ENCODE measurements at regions of chr9 and their contacts with region 1.

Region 1: DNA sequence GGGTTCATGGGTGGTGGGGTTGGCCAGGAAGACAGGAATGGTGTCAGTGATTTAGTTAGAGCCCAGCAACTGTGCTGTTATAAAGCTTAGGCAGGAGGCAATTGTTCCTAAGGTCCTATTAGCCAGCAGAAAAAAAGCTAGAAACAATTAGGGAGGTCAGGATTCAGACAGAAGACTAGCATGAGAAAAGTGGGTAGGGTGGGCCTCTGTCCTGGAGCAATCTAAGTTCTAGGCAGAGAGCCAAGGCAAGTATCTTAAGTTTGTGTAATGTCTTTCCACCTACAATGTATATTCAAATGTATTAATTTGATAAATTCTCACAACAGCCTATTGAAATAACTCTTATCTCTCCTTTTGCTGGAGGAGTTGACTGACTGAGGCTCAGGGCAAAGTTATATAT is 6.1 kb upstream of the ZFAND5 start:
- DNase-seq: no peak
- ATAC-seq: no peak
- H3K4me3 ChIP-seq: no peak overlapping the region
- H3K27ac ChIP-seq: no peak overlapping the region
- H3K4me1 ChIP-seq: no peaks in the 10 kb centered on the region
- H3K27me3 ChIP-seq: no peaks in the 10 kb centered on the region

Region 2: DNA sequence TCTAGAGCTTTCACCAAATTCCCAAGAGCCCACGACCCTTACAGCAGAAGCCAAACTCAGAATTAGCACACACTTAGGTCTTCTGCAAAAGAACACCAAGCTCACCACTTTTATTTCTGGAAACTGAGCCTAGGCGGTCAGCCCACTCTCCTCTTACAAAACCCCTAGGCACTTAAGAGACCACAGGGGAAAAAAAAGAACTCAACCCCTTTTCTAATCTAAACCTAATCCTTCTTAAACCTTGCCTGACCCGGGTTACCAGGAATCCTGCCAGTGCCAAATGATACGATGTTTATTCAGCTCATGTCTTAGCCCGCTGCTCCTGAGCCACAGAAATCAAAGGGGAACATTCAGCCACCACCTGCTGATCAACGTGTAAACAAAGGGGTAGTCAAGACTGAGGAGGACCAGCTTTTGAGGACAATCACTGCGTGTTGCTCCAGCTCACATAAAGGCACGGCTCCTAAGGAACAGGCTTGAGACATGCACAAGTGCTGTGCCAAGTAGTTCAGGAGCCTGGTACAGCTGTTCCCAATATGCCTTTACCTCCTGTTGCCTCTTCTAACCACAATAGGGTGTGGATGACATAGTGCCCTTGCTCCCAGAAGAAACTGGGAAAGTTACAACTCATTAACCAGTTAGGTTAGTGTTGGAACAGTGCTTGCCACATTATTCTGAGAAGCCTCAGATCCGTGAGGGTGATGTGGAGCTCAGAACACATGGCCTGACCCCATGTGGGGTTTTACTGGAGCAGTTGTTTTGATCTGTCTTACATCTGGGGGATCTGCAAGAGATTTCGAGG is 55.4 kb before region 1 on chr9:
- intact Hi-C with region 1: no loop called
- DNase-seq: peak in 1 of 3 donors; percentile 48
- ATAC-seq: peak; percentile 63 to 80
- H3K4me3 ChIP-seq: peak overlapping the region; percentile 14
- H3K27ac ChIP-seq: peak overlapping the region; percentile 42
- H3K4me1 ChIP-seq: peaks cover 4% of the 10 kb centered on the region
- H3K27me3 ChIP-seq: no peaks in the 10 kb centered on the region

Region 3: GRCh38 chr9:72586388-72587130 is 215.4 kb after region 1 on chr9:
- intact Hi-C with region 1: loop called in 2 of 4 experiments (anchors 10 kb)
- DNase-seq: no peak
- ATAC-seq: peak; percentile 61 to 78
- H3K4me3 ChIP-seq: no peak overlapping the region
- H3K27ac ChIP-seq: no peak overlapping the region
- H3K4me1 ChIP-seq: peaks cover 2% of the 10 kb centered on the region
- H3K27me3 ChIP-seq: no peaks in the 10 kb centered on the region